ENCODE measurements at regions of chr10 and their contacts with region 1.

Region 1: GRCh38 chr10:112307358-112308124 is 24.3 kb downstream of the TECTB start:
- DNase-seq: peak; percentile 61
- ATAC-seq: peak; percentile 87
- H3K4me3 ChIP-seq: no peak overlapping the region; a peak in 1 of 6 replicates
- H3K27ac ChIP-seq: peak overlapping the region; percentile 44
- H3K4me1 ChIP-seq: peaks cover 93% of the 10 kb centered on the region
- H3K27me3 ChIP-seq: no peaks in the 10 kb centered on the region
- CTCF ChIP-seq: peak; percentile 92
- EP300 ChIP-seq: no peak; a peak in 1 of 4 replicates
- POLR2A ChIP-seq: no peak
- RAD21 ChIP-seq: peak; percentile 95

Region 2: DNA sequence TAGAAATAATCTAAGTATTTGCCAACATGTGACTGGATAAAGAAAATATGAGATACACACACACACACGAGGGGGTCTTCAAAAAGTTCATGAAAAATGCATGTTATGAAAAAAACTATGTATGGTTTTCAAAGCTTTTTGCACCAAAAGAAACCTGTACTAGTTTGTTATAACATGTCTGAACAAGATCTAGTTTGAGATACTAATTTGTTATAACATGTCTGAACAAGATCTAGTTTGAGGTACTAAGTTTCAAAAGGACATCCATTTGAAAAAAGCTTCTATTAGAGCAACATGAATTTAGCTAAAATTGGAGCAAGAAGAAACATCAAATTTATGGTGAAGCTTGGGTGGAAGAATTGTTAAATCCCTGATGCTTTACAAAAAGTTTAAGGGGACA is 1250.5 kb before region 1 on chr10:
- CTCF ChIA-PET with region 1: no interaction called
- POLR2A ChIA-PET with region 1: no interaction called
- in situ Hi-C with region 1: no loop called
- intact Hi-C with region 1: no loop called
- DNase-seq: no peak
- ATAC-seq: no peak
- H3K4me3 ChIP-seq: no peak overlapping the region
- H3K27ac ChIP-seq: no peak overlapping the region
- H3K4me1 ChIP-seq: no peaks in the 10 kb centered on the region
- H3K27me3 ChIP-seq: no peaks in the 10 kb centered on the region
- CTCF ChIP-seq: no peak
- EP300 ChIP-seq: no peak
- POLR2A ChIP-seq: no peak
- RAD21 ChIP-seq: no peak

Region 3: DNA sequence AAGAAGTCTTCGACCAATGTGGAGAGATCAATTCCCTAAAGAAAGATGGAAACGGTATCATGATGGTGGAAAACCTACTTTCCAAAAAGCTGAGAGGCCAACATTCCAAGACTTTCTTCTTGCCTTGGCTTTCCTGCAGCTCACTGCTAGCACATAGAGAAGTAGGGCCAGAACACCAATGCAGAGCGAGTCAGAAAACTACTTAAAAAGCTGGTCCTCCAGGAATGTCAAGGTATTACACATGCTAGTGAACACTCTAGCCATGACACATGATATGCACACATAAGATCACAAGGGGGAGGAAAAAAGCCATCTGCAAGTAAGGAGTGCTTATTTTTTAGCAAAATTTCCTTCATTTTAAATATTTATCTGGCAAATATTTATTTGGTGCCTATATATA is 146.7 kb before region 1 on chr10:
- CTCF ChIA-PET with region 1: no interaction called
- POLR2A ChIA-PET with region 1: no interaction called
- in situ Hi-C with region 1: no loop called
- intact Hi-C with region 1: loop called (anchors 5 kb)
- DNase-seq: no peak
- ATAC-seq: peak; percentile 25; the same call in 1 of the 3 replicates
- H3K4me3 ChIP-seq: no peak overlapping the region
- H3K27ac ChIP-seq: no peak overlapping the region
- H3K4me1 ChIP-seq: no peaks in the 10 kb centered on the region
- H3K27me3 ChIP-seq: no peaks in the 10 kb centered on the region
- CTCF ChIP-seq: no peak
- EP300 ChIP-seq: no peak
- POLR2A ChIP-seq: no peak
- RAD21 ChIP-seq: no peak

Region 4: DNA sequence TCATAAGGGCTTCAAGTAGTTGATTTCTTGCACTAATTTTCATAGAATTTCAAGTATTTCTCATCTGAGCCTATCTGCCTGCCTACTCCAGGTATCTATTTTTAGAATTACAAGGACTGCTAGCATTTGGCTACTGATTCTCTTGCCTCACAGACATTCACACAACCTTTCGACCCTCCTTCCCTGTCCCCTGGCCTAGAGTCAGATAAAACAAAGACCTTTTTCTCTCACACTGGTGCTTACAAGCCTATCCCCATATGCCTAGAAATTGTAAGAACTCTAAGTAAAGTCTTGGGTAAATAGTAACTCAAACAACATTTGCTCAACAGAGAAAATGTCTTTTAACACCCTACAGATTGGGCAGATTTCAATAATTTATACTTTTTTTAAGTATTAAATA is 130.3 kb before region 1 on chr10:
- CTCF ChIA-PET with region 1: no interaction called
- POLR2A ChIA-PET with region 1: no interaction called
- in situ Hi-C with region 1: loop called (anchors 10 kb)
- intact Hi-C with region 1: loop called (anchors 1 kb)
- DNase-seq: peak; percentile 92
- ATAC-seq: peak; percentile 96
- H3K4me3 ChIP-seq: no peak overlapping the region
- H3K27ac ChIP-seq: peak overlapping the region; percentile 69
- H3K4me1 ChIP-seq: peaks cover 59% of the 10 kb centered on the region
- H3K27me3 ChIP-seq: no peaks in the 10 kb centered on the region
- CTCF ChIP-seq: no peak
- EP300 ChIP-seq: peak in 1 of 2 experiments; percentile 57; a peak in 2 of 4 replicates
- POLR2A ChIP-seq: no peak
- RAD21 ChIP-seq: no peak

Region 5: GRCh38 chr10:112209684-112210131 is 97.8 kb before region 1 on chr10:
- CTCF ChIA-PET with region 1: no interaction called
- POLR2A ChIA-PET with region 1: interaction called, 10 read pairs
- in situ Hi-C with region 1: no loop called
- intact Hi-C with region 1: no loop called
- DNase-seq: no peak
- ATAC-seq: peak; percentile 33
- H3K4me3 ChIP-seq: no peak overlapping the region
- H3K27ac ChIP-seq: no peak overlapping the region
- H3K4me1 ChIP-seq: peaks cover 54% of the 10 kb centered on the region
- H3K27me3 ChIP-seq: no peaks in the 10 kb centered on the region
- CTCF ChIP-seq: no peak
- EP300 ChIP-seq: no peak
- POLR2A ChIP-seq: no peak
- RAD21 ChIP-seq: no peak